GM18951 (cell line): ENCODE measurements at regions of chr9 and their contacts with region 1.

Region 1: GRCh38 chr9:14466429-14466818 is 152.5 kb upstream of the NFIB start:
- POLR2A ChIP-seq: no peak

Region 2: GRCh38 chr9:13450723-13451122 is 1015.7 kb before region 1 on chr9:
- in situ Hi-C with region 1: no loop called
- POLR2A ChIP-seq: no peak

Region 3: DNA sequence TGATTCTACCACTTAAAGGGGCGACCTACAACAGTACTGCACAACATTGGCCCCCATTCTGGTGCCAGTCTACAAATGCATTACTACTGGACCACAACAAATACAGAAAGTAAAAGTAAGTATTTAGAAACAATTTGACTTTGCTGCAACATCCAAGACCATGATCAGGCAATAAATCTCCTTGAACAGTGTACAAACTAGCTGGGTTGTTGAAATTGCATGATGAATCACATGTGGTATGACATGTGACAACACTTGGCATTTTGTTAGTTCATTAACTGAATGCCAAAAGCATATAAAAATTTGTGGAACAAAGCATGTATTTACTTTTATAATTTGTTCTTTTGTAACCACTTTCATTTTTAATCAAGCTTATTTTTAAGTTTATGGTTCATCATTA is 422.9 kb before region 1 on chr9:
- in situ Hi-C with region 1: no loop called
- POLR2A ChIP-seq: no peak

Region 4: GRCh38 chr9:14779566-14780022 is 313.2 kb after region 1 on chr9:
- in situ Hi-C with region 1: loop called (anchors 10 kb)
- POLR2A ChIP-seq: no peak